Common myeloid progenitor, CD34-positive (primary cell): ENCODE measurements at regions of chr12 and their contacts with region 1.

Region 1: GRCh38 chr12:122951979-122952892 is 14.0 kb downstream of the ABCB9 start:
- DNase-seq: peak; percentile 68 to 82 (median 74)
- H3K4me3 ChIP-seq: no peak overlapping the region
- H3K27ac ChIP-seq: no peak overlapping the region
- H3K4me1 ChIP-seq: peaks cover 0 to 10% (median 8%) of the 10 kb centered on the region in 4 experiments
- H3K27me3 ChIP-seq: no peaks in the 10 kb centered on the region

Region 2: GRCh38 chr12:122888232-122888867 is 63.9 kb before region 1 on chr12:
- CTCF ChIA-PET with region 1: interaction called, 171 read pairs
- POLR2A ChIA-PET with region 1: interaction called, 9 read pairs
- DNase-seq: peak; percentile 76 to 94 (median 91)
- H3K4me3 ChIP-seq: peak overlapping the region in 6 of 7 experiments; percentile 34 to 75 (median 54)
- H3K27ac ChIP-seq: peak overlapping the region; percentile 90 to 95
- H3K4me1 ChIP-seq: peaks cover 56 to 96% (median 91%) of the 10 kb centered on the region in 4 experiments
- H3K27me3 ChIP-seq: no peaks in the 10 kb centered on the region

Region 3: DNA sequence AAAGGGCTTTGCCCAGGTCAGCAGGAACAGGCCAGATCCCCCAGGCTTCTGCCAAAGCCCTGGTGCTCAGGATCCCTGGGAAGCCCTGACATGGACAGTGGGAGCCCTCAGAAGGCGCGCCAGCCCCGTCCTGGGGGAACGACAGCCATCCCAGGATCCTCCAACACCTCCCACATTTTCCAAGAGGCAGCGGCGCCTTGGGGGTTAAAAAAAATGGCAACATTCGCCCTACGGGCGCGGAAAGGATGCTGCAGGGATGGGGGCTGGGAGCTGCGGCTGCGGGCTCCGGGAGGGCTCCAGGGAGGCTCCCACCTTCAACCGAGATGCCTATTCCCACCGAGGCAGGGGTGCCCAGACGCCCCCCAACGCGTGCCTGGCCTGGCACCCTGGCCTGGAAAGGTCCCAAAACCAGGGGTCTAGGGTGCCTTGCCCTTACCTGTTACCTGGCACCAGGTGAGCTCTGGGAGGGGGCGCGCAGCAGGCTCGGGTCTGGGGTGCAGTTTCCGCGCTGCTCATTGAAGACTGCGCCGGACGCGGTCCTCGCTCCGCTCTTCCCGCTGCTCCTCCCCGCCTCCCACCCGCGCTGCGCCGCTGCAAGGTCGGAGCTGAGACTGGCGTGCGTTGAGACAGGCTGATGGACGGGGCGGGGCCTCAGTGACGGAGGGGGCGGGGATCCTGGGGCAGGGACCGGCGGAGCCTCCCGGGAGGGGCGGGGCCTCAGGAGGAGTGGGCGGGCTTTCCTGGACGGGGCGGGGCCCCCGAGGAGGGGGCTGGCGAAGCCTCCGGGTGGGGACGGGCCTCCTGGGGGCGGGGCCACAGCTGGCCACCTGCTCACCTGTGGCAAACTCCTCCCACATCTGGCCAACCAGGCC is 13.9 kb after region 1 on chr12 and contains the start of gene ABCB9:
- CTCF ChIA-PET with region 1: interaction called, 20 read pairs
- POLR2A ChIA-PET with region 1: interaction called, 3 read pairs
- DNase-seq: peak; percentile 92 to 94 (median 93)
- H3K4me3 ChIP-seq: peak within 1 kb of the TSS in 6 of 7 experiments; percentile 57 to 75 (median 72)
- H3K27ac ChIP-seq: peak within 1 kb of the TSS in 1 of 2 experiments; percentile 49
- H3K4me1 ChIP-seq: peaks cover 0 to 22% (median 13%) of the 10 kb centered on the region in 4 experiments
- H3K27me3 ChIP-seq: no peaks in the 10 kb centered on the region